SK-N-SH (cell line): ENCODE measurements at regions of chr11 and their contacts with region 1.

Region 1: DNA sequence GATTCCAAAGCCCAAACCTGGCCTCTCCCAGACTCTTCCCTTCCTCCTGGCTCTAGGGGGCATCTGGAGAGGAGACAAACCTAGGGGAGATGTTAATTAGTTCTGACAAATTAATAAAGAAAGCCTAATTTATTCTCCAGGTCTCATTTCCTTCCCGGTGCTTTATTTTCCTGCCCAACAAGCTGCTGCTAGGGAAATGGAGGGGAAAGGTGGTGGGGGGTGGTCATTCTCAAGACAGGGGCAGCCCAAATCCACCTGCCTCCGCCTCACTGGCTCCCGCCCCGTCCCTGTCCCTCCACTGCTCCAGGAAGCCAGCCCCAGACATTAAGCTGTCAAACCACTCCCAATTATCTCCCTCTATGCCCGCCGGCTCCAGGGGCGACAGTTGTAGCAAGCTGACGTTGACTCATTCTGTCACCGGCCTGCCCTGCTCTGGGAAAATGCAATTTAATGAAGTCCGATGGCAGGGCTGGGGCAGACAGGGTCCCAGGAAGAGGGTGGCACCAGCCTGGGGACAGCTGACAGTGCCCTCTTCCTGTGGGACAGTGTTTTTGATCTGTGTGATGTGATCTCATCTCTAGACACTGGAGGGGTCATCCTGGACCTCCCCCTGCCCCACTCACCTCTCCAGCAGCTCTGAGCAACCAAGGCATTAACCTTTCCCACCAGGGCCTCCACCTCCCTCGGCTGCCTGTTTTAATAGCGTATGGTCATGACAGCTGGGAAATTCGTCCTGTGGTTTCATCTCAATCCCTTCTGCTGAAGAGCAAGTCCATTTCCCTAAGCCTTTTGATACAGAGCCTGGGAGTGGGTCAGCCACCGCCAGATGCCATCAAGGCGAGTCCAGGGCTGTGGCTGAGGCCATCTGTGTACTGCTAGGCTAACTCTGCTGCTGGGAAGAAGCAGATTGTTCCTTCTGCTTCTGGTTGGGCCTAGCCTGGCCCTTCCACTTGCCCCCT is 27.1 kb downstream of the NECTIN1 start:
- DNase-seq: peak; percentile 88
- H3K4me3 ChIP-seq: no peak overlapping the region
- H3K27ac ChIP-seq: peak overlapping the region; percentile 30 to 96
- H3K4me1 ChIP-seq: peaks cover 4 to 89% of the 10 kb centered on the region in 2 experiments; a peak in 2 of 4 replicates
- H3K27me3 ChIP-seq: no peaks in the 10 kb centered on the region
- CTCF ChIP-seq: no peak
- EP300 ChIP-seq: peak in 1 of 2 experiments; percentile 71; a peak in 2 of 4 replicates
- RAD21 ChIP-seq: peak; percentile 37

Region 2: DNA sequence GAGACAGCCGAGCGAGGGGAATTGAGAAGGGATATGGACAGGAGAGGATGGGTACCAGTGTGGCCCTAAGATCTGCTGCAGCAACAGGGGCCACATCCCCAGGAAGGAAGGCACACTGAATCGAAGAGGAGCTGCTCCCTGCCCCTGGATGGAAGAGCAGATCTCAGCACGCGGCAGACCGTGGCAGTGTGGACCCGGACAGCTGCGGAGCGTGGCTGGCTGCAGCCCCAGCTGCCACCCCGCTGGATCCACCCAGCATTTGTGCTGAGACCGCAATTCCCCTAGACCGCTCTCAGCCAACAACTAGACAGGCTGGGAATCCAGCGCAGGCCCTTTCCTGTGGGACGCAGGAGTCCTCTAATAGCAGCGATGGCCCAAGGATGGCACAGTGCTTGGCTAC is 67.6 kb before region 1 on chr11:
- CTCF ChIA-PET with region 1: no interaction called
- POLR2A ChIA-PET with region 1: no interaction called
- DNase-seq: no peak
- H3K4me3 ChIP-seq: no peak overlapping the region
- H3K27ac ChIP-seq: no peak overlapping the region
- H3K4me1 ChIP-seq: peaks cover 0 to 10% of the 10 kb centered on the region in 2 experiments; a peak in 1 of 4 replicates
- H3K27me3 ChIP-seq: no peaks in the 10 kb centered on the region
- CTCF ChIP-seq: no peak
- EP300 ChIP-seq: no peak
- RAD21 ChIP-seq: no peak

Region 3: DNA sequence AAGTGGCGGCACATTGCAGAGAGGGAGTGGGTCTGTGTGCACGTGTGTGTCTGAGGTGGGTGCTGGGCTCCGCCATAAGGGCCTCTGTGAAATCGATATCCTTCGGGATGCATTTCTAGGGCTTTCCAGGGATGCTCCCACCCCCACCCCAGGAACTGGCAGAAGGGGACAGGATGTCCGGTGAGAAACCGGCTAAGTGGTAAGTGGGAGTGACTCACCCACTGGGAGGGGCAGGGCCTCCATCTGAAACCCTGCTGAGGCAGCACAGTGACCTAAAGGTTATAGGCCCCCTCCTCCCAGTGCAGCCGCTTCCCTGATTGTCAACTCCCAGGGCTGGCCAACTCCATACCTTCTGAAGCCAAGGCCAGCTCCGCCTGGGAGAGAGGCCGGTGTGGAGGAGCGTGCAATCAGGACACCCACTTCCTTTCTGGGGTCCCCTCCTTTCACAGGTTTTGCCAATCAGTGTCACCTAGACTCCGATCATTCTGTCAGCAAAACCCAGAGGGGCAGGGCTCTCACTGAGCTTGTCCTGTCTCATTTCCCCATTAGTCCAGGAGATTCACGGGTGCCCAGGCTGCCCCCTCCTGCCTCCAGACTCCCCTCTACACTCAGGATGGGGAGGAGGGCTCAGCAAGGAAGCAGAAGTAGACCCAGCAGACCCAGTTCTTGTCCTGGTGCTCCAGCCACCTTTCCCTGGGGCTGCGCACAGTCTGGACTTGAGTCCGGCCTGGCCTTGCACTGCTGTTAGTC is 17.3 kb before region 1 on chr11:
- CTCF ChIA-PET with region 1: interaction called, 17 read pairs
- POLR2A ChIA-PET with region 1: interaction called, 5 read pairs
- DNase-seq: peak; percentile 69
- H3K4me3 ChIP-seq: no peak overlapping the region
- H3K27ac ChIP-seq: peak overlapping the region; percentile 45 to 97
- H3K4me1 ChIP-seq: peaks cover 15 to 98% of the 10 kb centered on the region in 2 experiments
- H3K27me3 ChIP-seq: no peaks in the 10 kb centered on the region
- CTCF ChIP-seq: no peak
- EP300 ChIP-seq: no peak
- RAD21 ChIP-seq: no peak; the same call in 1 of the 2 replicates

Region 4: GRCh38 chr11:119839476-119840133 is 137.7 kb after region 1 on chr11:
- CTCF ChIA-PET with region 1: no interaction called
- POLR2A ChIA-PET with region 1: no interaction called
- DNase-seq: peak; percentile 53
- H3K4me3 ChIP-seq: no peak overlapping the region
- H3K27ac ChIP-seq: peak overlapping the region in 1 of 2 experiments; percentile 40; a peak in 1 of 4 replicates
- H3K4me1 ChIP-seq: peaks cover 0 to 29% of the 10 kb centered on the region in 2 experiments; a peak in 1 of 4 replicates
- H3K27me3 ChIP-seq: 0 out of 2 replicates have a peak, but pooled peaks cover 8% of the 10 kb centered on the region
- CTCF ChIP-seq: no peak
- EP300 ChIP-seq: no peak
- RAD21 ChIP-seq: no peak

Region 5: DNA sequence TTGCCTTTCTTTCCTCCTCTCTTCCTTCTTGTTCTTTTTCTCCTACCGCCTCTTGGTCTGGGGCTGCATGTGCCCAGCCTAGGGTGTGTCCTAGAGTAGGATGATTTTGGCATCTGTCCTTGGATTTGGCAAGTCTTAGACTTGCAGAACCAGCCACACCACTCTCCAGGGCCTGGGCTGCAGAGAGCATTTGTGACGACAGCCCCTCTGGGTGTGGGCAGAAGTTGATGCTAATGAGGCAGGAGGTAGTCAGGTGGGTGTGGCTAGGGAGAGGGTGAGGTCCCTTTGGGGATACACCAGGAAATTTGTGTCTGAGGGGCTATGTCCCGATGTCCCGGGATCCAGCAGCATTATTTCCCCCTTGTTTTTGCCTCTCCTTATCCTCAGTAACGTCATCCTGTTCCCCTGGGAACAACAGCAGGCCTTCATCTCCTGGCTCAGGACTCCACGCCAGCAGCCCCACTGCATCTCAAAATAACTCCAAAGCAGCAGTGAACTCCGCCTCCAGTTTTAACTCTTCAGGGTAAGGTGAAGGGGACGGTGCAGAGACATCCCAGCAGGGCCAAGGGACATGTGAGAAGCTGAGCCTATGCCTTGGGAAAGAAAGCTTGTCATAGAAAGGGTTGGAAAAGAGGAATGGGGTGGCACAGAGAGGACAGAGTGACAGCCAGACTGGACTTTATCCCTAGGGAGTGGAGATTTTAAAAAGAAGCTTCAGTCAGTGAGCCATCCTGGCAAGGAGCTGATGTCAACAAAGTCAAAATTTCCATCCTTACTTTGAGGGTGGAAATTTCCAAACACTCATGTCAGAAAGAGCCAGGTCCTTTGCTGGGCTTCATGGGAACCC is 615.2 kb after region 1 on chr11:
- CTCF ChIA-PET with region 1: no interaction called
- POLR2A ChIA-PET with region 1: no interaction called
- DNase-seq: no peak
- H3K4me3 ChIP-seq: no peak overlapping the region
- H3K27ac ChIP-seq: no peak overlapping the region
- H3K4me1 ChIP-seq: no peaks in the 10 kb centered on the region; a peak in 1 of 4 replicates
- H3K27me3 ChIP-seq: no peaks in the 10 kb centered on the region
- CTCF ChIP-seq: no peak
- EP300 ChIP-seq: no peak
- RAD21 ChIP-seq: no peak

Region 6: DNA sequence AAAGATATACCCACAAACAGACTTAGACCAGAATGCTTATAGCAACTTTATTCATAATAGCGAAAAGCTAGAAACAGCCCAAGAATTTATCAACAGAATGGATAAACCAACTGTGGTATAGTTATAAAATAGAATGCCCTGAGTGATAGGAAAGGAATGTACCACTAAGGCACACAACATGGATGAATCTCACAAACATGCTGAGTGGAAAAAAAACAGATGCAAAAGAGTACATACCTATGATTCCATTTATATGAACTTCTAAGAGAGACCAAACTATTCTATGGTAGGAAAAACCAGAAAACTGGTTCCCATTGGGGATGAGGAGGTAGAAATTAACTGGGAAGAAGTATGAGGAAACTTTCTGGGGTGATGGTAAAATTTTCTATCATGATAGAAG is 769.3 kb after region 1 on chr11:
- CTCF ChIA-PET with region 1: no interaction called
- POLR2A ChIA-PET with region 1: no interaction called
- DNase-seq: no peak
- H3K4me3 ChIP-seq: no peak overlapping the region
- H3K27ac ChIP-seq: peak overlapping the region in 1 of 2 experiments; percentile 24; a peak in 2 of 4 replicates
- H3K4me1 ChIP-seq: no peaks in the 10 kb centered on the region
- H3K27me3 ChIP-seq: no peaks in the 10 kb centered on the region
- CTCF ChIP-seq: no peak
- EP300 ChIP-seq: no peak
- RAD21 ChIP-seq: no peak